A673 (cell line): ENCODE measurements at regions of chr4 and their contacts with region 1.

Region 1: GRCh38 chr4:2761035-2761923 is 5.1 kb upstream of the TNIP2 start:
- DNase-seq: no peak
- H3K4me3 ChIP-seq: no peak overlapping the region
- H3K27ac ChIP-seq: no peak overlapping the region
- H3K4me1 ChIP-seq: no peaks in the 10 kb centered on the region
- H3K27me3 ChIP-seq: no peaks in the 10 kb centered on the region
- CTCF ChIP-seq: no peak

Region 2: DNA sequence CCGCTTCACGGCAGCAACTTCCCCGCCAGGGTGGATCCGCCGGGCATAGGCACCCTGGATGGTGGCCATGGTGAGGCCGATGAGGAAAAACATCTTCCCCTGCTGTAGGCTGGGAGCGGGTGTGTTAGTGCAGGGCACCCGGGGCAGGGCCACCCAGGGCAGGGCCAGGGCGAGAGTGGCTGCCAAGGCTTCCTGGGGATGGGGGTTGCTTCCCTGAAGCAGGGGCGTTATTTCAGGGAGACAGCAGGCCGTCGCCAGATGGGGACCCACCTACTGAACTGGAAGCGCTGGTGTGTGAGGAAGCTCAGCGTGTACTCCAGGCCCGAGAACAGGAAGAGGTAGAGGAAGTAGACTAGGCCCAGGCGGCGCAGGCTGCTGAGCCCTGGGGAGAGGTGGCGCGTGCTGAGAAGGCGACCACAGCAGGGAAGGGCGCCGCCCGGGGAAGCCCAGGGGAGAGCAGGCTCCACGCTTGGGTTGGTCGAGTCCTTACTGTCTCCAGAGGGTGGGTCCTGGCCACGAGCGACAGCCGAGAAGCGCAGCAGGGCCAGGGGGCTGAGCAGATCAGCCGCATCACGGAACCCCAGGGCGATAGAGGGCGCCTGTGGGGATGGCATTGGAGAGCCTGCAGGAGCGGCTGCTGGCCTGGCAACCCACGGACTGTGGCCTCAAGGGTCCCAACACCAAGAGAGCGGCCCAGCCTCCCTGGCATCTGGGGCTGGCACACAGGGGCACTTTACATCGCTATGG is 170.4 kb after region 1 on chr4:
- CTCF ChIA-PET with region 1: no interaction called
- POLR2A ChIA-PET with region 1: no interaction called
- intact Hi-C with region 1: loop called (anchors 2 kb)
- DNase-seq: peak; percentile 59
- H3K4me3 ChIP-seq: no peak overlapping the region
- H3K27ac ChIP-seq: no peak overlapping the region
- H3K4me1 ChIP-seq: peaks cover 19% of the 10 kb centered on the region
- H3K27me3 ChIP-seq: no peaks in the 10 kb centered on the region
- CTCF ChIP-seq: 0 out of 2 replicates have a peak, but pooled peaks have one; percentile 25

Region 3: DNA sequence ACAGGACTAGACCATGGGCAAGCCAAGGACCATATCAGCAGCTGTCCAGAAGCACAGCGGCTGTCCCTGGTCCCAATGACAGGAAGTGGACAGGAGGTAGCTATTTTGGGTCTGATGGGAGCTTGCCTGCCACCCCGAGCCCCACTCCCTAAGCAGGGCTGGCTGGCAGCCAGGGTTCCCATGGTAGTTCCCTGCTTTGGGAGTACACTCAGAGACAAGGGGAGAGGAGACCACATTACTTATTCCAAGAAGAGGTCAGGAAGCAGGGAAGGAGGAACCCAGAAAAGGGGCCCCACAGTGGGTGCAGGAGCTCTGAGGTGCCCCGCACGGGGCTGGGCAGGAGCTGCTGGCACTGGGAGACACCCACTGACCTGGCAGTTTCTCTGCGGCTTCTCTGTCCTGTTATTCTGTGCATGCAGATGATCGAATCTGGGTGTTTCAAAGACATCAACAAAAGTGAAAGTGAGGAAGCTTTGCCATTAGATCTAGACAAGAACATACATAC is 276.7 kb after region 1 on chr4:
- CTCF ChIA-PET with region 1: interaction called, 4 read pairs
- POLR2A ChIA-PET with region 1: no interaction called
- intact Hi-C with region 1: loop called (anchors 10 kb)
- DNase-seq: peak; percentile 26
- H3K4me3 ChIP-seq: no peak overlapping the region
- H3K27ac ChIP-seq: no peak overlapping the region
- H3K4me1 ChIP-seq: no peaks in the 10 kb centered on the region
- H3K27me3 ChIP-seq: no peaks in the 10 kb centered on the region
- CTCF ChIP-seq: no peak